Heart right ventricle (tissue), 16 donors: ENCODE measurements at regions of chr12 and their contacts with region 1.

Region 1: GRCh38 chr12:18383203-18383602 is 121.9 kb downstream of the PIK3C2G start:
- DNase-seq: no peak
- ATAC-seq: peak in 4 of 8 donors; percentile 35 to 58 (median 50)
- H3K4me3 ChIP-seq: peak overlapping the region in 2 of 10 donors; percentile 0 to 3
- H3K27ac ChIP-seq: no peak overlapping the region
- H3K4me1 ChIP-seq: peaks cover 0 to 14% (median 5%) of the 10 kb centered on the region in 9 donors
- H3K27me3 ChIP-seq: no peaks in the 10 kb centered on the region
- CTCF ChIP-seq: no peak

Region 2: GRCh38 chr12:18123707-18124106 is 259.5 kb before region 1 on chr12:
- intact Hi-C with region 1: no loop called
- DNase-seq: no peak
- ATAC-seq: no peak
- H3K4me3 ChIP-seq: no peak overlapping the region
- H3K27ac ChIP-seq: no peak overlapping the region
- H3K4me1 ChIP-seq: no peaks in the 10 kb centered on the region
- H3K27me3 ChIP-seq: no peaks in the 10 kb centered on the region
- CTCF ChIP-seq: no peak

Region 3: GRCh38 chr12:19482551-19483109 is 1099.4 kb after region 1 on chr12:
- intact Hi-C with region 1: loop called in 1 of 10 experiments (anchors 5 kb)
- DNase-seq: peak; percentile 7 to 22
- ATAC-seq: peak; percentile 33 to 60 (median 56)
- H3K4me3 ChIP-seq: no peak overlapping the region
- H3K27ac ChIP-seq: peak overlapping the region in 1 of 10 donors; percentile 19
- H3K4me1 ChIP-seq: peaks cover 0 to 42% (median 28%) of the 10 kb centered on the region in 9 donors
- H3K27me3 ChIP-seq: no peaks in the 10 kb centered on the region
- CTCF ChIP-seq: no peak